Naive thymus-derived CD4-positive, alpha-beta T cell (primary cell): ENCODE measurements at regions of chr3 and their contacts with region 1.

Region 1: DNA sequence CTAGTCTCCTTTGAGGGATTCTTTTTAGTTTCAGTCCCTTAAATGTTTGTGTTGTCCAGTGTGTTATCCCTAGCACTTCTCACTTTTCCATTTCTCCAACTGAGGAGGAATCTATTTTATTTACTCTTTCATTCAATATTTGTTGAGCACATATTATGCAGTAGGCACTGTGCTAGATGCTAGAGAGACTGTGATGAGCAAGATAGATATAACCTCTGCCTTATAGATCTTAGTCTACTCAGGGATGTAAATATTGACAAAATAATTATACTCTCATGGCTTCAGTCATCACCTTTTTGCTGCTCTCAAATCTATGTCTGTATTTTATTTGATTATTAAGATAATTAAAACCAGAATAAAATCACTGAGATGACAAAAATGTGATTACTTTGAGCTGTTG is 100.4 kb downstream of the LEKR1 start:
- DNase-seq: no peak
- ATAC-seq: no peak
- H3K4me3 ChIP-seq: no peak overlapping the region
- H3K4me3 Mint-ChIP-seq: no peak overlapping the region
- H3K27ac ChIP-seq: no peak overlapping the region
- H3K27ac Mint-ChIP-seq: no peak overlapping the region
- H3K4me1 ChIP-seq: no peaks in the 10 kb centered on the region
- H3K4me1 Mint-ChIP-seq: no peaks in the 10 kb centered on the region
- H3K27me3 ChIP-seq: no peaks in the 10 kb centered on the region
- H3K27me3 Mint-ChIP-seq: peaks cover 0 to 38% (median 7%) of the 10 kb centered on the region in 5 donors

Region 2: GRCh38 chr3:157067114-157067513 is 140.6 kb after region 1 on chr3:
- CTCF ChIA-PET with region 1: no interaction called
- POLR2A ChIA-PET with region 1: no interaction called
- intact Hi-C with region 1: loop called in 1 of 2 experiments (anchors 5 kb)
- DNase-seq: peak in 4 of 9 donors; percentile 4 to 54 (median 38)
- ATAC-seq: peak; percentile 73
- H3K4me3 ChIP-seq: no peak overlapping the region
- H3K4me3 Mint-ChIP-seq: peak overlapping the region in 7 of 10 donors; percentile 1 to 67 (median 48)
- H3K27ac ChIP-seq: no peak overlapping the region
- H3K27ac Mint-ChIP-seq: peak overlapping the region in 8 of 9 donors; percentile 43 to 90 (median 66)
- H3K4me1 ChIP-seq: peaks cover 7 to 30% of the 10 kb centered on the region in 2 donors
- H3K4me1 Mint-ChIP-seq: peaks cover 10 to 37% (median 19%) of the 10 kb centered on the region in 7 donors
- H3K27me3 ChIP-seq: no peaks in the 10 kb centered on the region
- H3K27me3 Mint-ChIP-seq: peaks cover 0 to 9% (median 0%) of the 10 kb centered on the region in 5 donors

Region 3: DNA sequence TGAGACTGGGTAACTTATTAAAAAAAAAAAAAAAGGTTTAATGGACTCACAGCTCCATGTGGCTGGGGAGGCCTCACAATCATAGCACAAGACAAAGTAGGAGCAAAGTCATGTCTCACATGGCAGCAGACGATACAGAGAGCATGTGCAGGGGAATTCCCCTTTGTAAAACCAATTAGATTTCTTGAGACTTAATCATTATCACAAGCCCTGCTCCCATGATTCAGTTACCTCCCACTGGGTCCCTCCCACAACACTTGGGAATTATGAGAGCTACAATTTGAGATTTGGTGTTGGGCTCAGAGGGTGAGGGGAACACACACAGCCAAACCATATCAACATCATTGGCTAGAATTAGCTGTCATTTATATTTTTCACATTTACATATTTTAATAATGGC is 1404.3 kb after region 1 on chr3:
- CTCF ChIA-PET with region 1: no interaction called
- POLR2A ChIA-PET with region 1: no interaction called
- intact Hi-C with region 1: no loop called
- DNase-seq: no peak
- ATAC-seq: no peak
- H3K4me3 ChIP-seq: no peak overlapping the region
- H3K4me3 Mint-ChIP-seq: no peak overlapping the region
- H3K27ac ChIP-seq: no peak overlapping the region
- H3K27ac Mint-ChIP-seq: no peak overlapping the region
- H3K4me1 ChIP-seq: no peaks in the 10 kb centered on the region
- H3K4me1 Mint-ChIP-seq: peaks cover 0 to 10% (median 7%) of the 10 kb centered on the region in 7 donors
- H3K27me3 ChIP-seq: no peaks in the 10 kb centered on the region
- H3K27me3 Mint-ChIP-seq: no peaks in the 10 kb centered on the region